Natural killer cell (primary cell): ENCODE measurements at regions of chr9 and their contacts with region 1.

Region 1: GRCh38 chr9:93468763-93469456 is 15.5 kb upstream of the FAM120AOS start:
- DNase-seq: peak in 1 of 2 donors; percentile 17
- ATAC-seq: peak; percentile 60 to 70 (median 68)
- H3K4me3 ChIP-seq: no peak overlapping the region
- H3K4me3 Mint-ChIP-seq: peak overlapping the region; percentile 85
- H3K27ac ChIP-seq: peak overlapping the region; percentile 37
- H3K27ac Mint-ChIP-seq: peak overlapping the region; percentile 91 to 93
- H3K4me1 ChIP-seq: peaks cover 31% of the 10 kb centered on the region
- H3K4me1 Mint-ChIP-seq: peaks cover 66 to 79% of the 10 kb centered on the region in 2 donors
- H3K27me3 ChIP-seq: no peaks in the 10 kb centered on the region
- H3K27me3 Mint-ChIP-seq: no peaks in the 10 kb centered on the region
- CTCF ChIP-seq: no peak

Region 2: GRCh38 chr9:93501406-93501805 is 32.5 kb after region 1 on chr9:
- intact Hi-C with region 1: loop called (anchors 5 kb)
- DNase-seq: peak in 1 of 2 donors; percentile 44
- ATAC-seq: peak in 2 of 3 donors; percentile 29 to 63
- H3K4me3 ChIP-seq: no peak overlapping the region
- H3K4me3 Mint-ChIP-seq: peak overlapping the region; percentile 87
- H3K27ac ChIP-seq: peak overlapping the region; percentile 24
- H3K27ac Mint-ChIP-seq: peak overlapping the region; percentile 88 to 92
- H3K4me1 ChIP-seq: peaks cover 19% of the 10 kb centered on the region
- H3K4me1 Mint-ChIP-seq: peaks cover 40 to 48% of the 10 kb centered on the region in 2 donors
- H3K27me3 ChIP-seq: no peaks in the 10 kb centered on the region
- H3K27me3 Mint-ChIP-seq: no peaks in the 10 kb centered on the region
- CTCF ChIP-seq: no peak

Region 3: DNA sequence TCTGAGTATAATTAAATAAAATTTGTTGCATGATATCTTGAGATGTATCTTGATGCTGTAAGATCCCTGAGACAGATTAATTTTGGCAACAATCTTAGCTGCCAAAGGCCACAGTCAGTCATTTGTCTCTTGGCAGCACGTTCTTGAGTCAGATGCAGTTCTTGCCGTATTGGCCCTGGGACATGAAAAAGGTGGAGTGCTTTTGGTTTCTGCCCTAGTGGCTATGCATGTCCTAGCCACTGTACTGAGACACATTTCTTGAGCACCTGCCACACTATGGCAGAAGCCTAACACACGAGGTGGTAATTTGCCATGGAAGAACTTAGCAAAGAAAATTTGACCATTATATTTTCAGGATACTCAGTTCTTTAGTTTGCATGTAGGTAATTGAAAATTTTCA is 62.5 kb after region 1 on chr9:
- intact Hi-C with region 1: no loop called
- DNase-seq: no peak
- ATAC-seq: no peak
- H3K4me3 ChIP-seq: no peak overlapping the region
- H3K4me3 Mint-ChIP-seq: no peak overlapping the region
- H3K27ac ChIP-seq: no peak overlapping the region
- H3K27ac Mint-ChIP-seq: no peak overlapping the region
- H3K4me1 ChIP-seq: no peaks in the 10 kb centered on the region
- H3K4me1 Mint-ChIP-seq: peaks cover 8 to 34% of the 10 kb centered on the region in 2 donors
- H3K27me3 ChIP-seq: no peaks in the 10 kb centered on the region
- H3K27me3 Mint-ChIP-seq: no peaks in the 10 kb centered on the region
- CTCF ChIP-seq: no peak

Region 4: DNA sequence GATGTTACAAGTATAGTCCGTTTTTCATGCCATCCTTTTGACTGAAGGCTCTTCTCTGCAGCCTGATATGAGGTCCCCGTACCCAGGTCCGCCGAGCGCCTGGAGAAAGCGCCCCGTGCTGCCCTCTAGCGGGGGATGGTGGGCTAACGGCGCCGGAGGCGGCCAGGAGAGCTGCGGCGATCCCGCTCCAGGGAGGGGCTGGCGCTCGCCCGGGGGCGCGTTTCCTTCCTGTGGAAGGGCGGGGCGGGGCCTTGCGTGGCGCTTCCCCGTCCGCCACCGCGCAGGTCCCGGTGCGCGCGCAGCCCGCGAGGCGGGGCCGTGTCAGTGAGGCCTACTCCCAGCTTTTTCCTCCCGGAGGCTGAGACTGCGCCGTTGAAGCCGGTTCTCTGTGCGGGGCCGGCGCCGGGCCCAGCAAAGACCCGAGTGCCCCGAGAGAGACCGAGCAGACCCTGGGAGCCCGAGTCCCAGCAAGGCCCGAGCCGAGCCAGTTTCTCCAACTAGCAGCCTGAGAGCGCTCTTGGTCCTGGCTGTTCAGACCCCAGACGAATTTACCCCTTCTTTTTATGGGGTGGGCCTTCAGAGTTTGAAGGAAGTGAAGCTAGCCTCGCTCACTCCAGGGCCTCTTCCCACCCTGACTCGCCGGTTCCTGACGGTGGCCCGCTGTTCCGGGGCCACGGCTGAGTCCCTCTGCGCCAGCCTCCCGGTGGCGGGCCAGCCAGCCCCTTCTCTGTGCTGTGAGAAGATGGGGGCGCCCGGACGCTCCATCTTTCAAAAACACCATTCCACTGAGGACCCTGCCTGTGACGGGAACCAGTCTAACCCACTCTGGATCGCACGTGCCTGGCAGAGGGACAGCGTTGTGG is 97.7 kb after region 1 on chr9:
- intact Hi-C with region 1: loop called (anchors 5 kb)
- DNase-seq: peak; percentile 98
- ATAC-seq: peak; percentile 98 to 100 (median 98)
- H3K4me3 ChIP-seq: peak overlapping the region; percentile 71
- H3K4me3 Mint-ChIP-seq: peak overlapping the region; percentile 90
- H3K27ac ChIP-seq: peak overlapping the region; percentile 94
- H3K27ac Mint-ChIP-seq: peak overlapping the region; percentile 87
- H3K4me1 ChIP-seq: peaks cover 17% of the 10 kb centered on the region
- H3K4me1 Mint-ChIP-seq: peaks cover 10 to 18% of the 10 kb centered on the region in 2 donors
- H3K27me3 ChIP-seq: no peaks in the 10 kb centered on the region
- H3K27me3 Mint-ChIP-seq: no peaks in the 10 kb centered on the region
- CTCF ChIP-seq: peak; percentile 88